PC-9 (cell line): ENCODE measurements at regions of chr3 and their contacts with region 1.

Region 1: GRCh38 chr3:116059421-116060096 is 385.7 kb downstream of the LSAMP start:
- DNase-seq: peak; percentile 77 to 80
- H3K4me3 ChIP-seq: no peak overlapping the region
- H3K27ac ChIP-seq: peak overlapping the region; percentile 43; the same call in 1 of the 2 replicates
- H3K4me1 ChIP-seq: peaks cover 12% of the 10 kb centered on the region
- H3K27me3 ChIP-seq: no peaks in the 10 kb centered on the region
- CTCF ChIP-seq: no peak

Region 2: GRCh38 chr3:115986555-115987207 is 72.9 kb before region 1 on chr3:
- CTCF ChIA-PET with region 1: no interaction called
- POLR2A ChIA-PET with region 1: no interaction called
- intact Hi-C with region 1: loop called (anchors 5 kb)
- DNase-seq: peak in 1 of 2 experiments; percentile 39
- H3K4me3 ChIP-seq: no peak overlapping the region
- H3K27ac ChIP-seq: no peak overlapping the region
- H3K4me1 ChIP-seq: no peaks in the 10 kb centered on the region
- H3K27me3 ChIP-seq: no peaks in the 10 kb centered on the region
- CTCF ChIP-seq: peak; percentile 57

Region 3: DNA sequence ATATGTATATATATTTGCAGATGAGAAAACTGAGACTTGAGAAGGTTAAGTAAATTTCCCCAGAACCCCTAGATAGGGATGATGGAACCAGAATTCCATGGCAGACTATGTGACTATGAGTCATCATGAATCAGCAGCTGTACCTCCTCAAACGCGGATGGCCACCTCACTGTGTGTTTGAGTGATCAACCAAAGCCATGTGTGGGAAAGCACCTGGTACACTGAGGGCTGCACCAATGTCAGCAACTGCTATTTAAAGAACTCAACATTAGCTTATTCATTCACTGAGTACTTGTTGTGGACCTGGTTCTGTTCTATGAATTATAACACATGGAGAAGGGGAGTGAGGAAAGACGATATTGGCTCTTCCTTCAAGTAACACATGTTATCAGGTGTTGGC is 59.2 kb before region 1 on chr3:
- CTCF ChIA-PET with region 1: no interaction called
- POLR2A ChIA-PET with region 1: no interaction called
- intact Hi-C with region 1: loop called (anchors 1 kb)
- DNase-seq: peak in 1 of 2 experiments; percentile 59
- H3K4me3 ChIP-seq: no peak overlapping the region
- H3K27ac ChIP-seq: no peak overlapping the region
- H3K4me1 ChIP-seq: no peaks in the 10 kb centered on the region; the same call in 1 of the 2 replicates
- H3K27me3 ChIP-seq: no peaks in the 10 kb centered on the region
- CTCF ChIP-seq: no peak

Region 4: GRCh38 chr3:116350119-116350733 is 290.7 kb after region 1 on chr3:
- CTCF ChIA-PET with region 1: no interaction called
- POLR2A ChIA-PET with region 1: no interaction called
- intact Hi-C with region 1: no loop called
- DNase-seq: no peak
- H3K4me3 ChIP-seq: no peak overlapping the region
- H3K27ac ChIP-seq: no peak overlapping the region
- H3K4me1 ChIP-seq: no peaks in the 10 kb centered on the region
- H3K27me3 ChIP-seq: no peaks in the 10 kb centered on the region
- CTCF ChIP-seq: no peak